HEK293T (cell line): ENCODE measurements at regions of chr14 and their contacts with region 1.

Region 1: DNA sequence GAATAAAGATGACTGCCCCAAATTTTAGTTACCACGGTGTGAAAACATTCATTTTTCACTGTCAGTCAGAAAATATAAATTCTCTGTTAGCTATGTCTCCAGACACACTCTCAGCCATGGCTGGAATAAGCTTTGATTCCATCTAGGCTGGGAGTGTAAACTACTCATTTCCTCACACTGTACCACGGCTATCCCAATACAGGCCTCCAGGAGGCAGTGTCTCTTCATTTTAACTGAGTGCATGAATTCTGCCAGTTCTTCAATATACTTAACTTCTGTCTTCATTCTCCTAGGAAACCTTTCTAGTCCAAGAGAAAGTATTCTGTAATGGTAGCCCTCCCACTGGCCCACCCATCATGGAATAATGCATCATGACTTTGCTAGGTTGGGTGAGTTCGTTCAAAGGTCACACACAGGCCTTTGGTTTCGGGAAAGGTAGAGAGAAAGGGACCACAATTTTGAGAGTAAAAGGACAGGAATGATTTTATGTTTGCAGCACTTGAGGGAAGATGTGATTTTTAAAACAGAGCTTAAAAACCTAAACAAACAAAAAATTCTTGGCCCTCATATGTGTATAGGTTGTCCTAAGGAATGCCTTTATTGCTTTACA is 381.1 kb downstream of the SEC23A start:
- DNase-seq: peak; percentile 57

Region 2: GRCh38 chr14:38867561-38868150 is 145.7 kb after region 1 on chr14:
- CTCF ChIA-PET with region 1: interaction called, 10 read pairs
- POLR2A ChIA-PET with region 1: no interaction called
- DNase-seq: peak; percentile 72